HEK293 (cell line): ENCODE measurements at regions of chr19 and their contacts with region 1.

Region 1: GRCh38 chr19:8334458-8335342 is 8.4 kb downstream of the KANK3 start:
- H3K4me3 ChIP-seq: peak overlapping the region; percentile 31
- H3K27ac ChIP-seq: peak overlapping the region; percentile 21; the same call in 1 of the 2 replicates
- H3K4me1 ChIP-seq: no peaks in the 10 kb centered on the region; the same call in 1 of the 2 replicates
- CTCF ChIP-seq: no peak

Region 2: GRCh38 chr19:8321060-8321985 is 13.4 kb before region 1 on chr19 and contains the starts of genes NDUFA7 and RPS28:
- CTCF ChIA-PET with region 1: interaction called, 5 read pairs
- POLR2A ChIA-PET with region 1: interaction called, 22 read pairs
- H3K4me3 ChIP-seq: peak within 1 kb of the TSS; percentile 97
- H3K27ac ChIP-seq: peak within 1 kb of the TSS; percentile 83
- H3K4me1 ChIP-seq: peaks cover 5% of the 10 kb centered on the region; the same call in 1 of the 2 replicates
- CTCF ChIP-seq: peak; percentile 81